Mammary epithelial cell (primary cell): ENCODE measurements at regions of chr13 and their contacts with region 1.

Region 1: GRCh38 chr13:79541426-79542049 is 60.6 kb downstream of the NDFIP2 start:
- DNase-seq: peak; percentile 42
- H3K4me3 ChIP-seq: no peak overlapping the region
- H3K27ac ChIP-seq: no peak overlapping the region
- H3K4me1 ChIP-seq: no peaks in the 10 kb centered on the region
- H3K27me3 ChIP-seq: no peaks in the 10 kb centered on the region
- CTCF ChIP-seq: peak; percentile 58 to 71

Region 2: DNA sequence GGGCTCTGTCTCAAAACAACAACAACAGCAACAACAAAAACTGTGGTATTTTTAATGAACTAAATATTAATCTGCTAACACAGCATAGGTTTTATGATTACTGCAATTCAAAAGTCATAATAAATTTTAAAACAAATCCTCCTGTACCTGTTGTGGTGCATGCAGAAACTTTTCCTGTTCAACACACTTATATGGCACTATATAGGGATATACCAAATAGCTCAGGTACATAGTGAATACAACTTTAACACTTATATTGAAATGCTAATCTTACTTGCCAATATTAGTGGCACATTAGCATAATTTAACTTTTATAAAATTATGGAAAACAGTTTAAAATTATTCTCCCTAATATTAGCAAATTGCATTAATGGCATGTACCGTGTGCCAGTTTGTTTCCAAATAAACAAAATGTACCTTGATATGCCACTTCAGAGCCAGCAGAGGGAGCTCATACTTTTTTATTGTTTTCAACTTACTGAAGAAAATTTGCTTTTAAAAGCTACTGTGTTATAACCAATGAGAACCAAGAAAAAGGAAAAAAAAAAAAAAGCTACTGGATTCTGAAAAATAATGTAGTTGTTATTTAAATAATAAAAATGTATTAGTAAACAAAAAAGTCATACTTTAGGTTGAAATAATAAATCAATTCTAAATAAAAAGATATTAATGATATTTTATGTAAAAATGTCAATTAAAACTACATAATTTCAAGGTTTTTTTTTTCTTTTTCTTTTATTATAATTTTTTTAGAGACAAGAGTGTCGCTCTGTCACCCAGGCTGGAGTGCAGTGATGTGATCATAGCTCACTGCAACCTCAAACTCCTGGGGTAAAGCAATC is 117.5 kb before region 1 on chr13:
- CTCF ChIA-PET with region 1: interaction called, 11 read pairs
- dilution Hi-C with region 1: no loop called
- in situ Hi-C with region 1: loop called (anchors 5 kb)
- intact Hi-C with region 1: loop called (anchors 1 kb)
- DNase-seq: no peak
- H3K4me3 ChIP-seq: no peak overlapping the region
- H3K27ac ChIP-seq: no peak overlapping the region
- H3K4me1 ChIP-seq: no peaks in the 10 kb centered on the region
- H3K27me3 ChIP-seq: no peaks in the 10 kb centered on the region
- CTCF ChIP-seq: peak; percentile 59 to 67

Region 3: GRCh38 chr13:79451500-79451962 is 90.0 kb before region 1 on chr13:
- CTCF ChIA-PET with region 1: no interaction called
- dilution Hi-C with region 1: no loop called
- in situ Hi-C with region 1: no loop called
- intact Hi-C with region 1: no loop called
- DNase-seq: peak; percentile 93
- H3K4me3 ChIP-seq: no peak overlapping the region
- H3K27ac ChIP-seq: peak overlapping the region; percentile 26
- H3K4me1 ChIP-seq: peaks cover 8% of the 10 kb centered on the region
- H3K27me3 ChIP-seq: no peaks in the 10 kb centered on the region
- CTCF ChIP-seq: no peak

Region 4: GRCh38 chr13:79501538-79502232 is 39.9 kb before region 1 on chr13:
- CTCF ChIA-PET with region 1: no interaction called
- dilution Hi-C with region 1: loop called (anchors 5 kb)
- in situ Hi-C with region 1: no loop called
- intact Hi-C with region 1: no loop called
- DNase-seq: peak; percentile 23
- H3K4me3 ChIP-seq: no peak overlapping the region
- H3K27ac ChIP-seq: no peak overlapping the region
- H3K4me1 ChIP-seq: peaks cover 11% of the 10 kb centered on the region
- H3K27me3 ChIP-seq: no peaks in the 10 kb centered on the region
- CTCF ChIP-seq: no peak

Region 5: GRCh38 chr13:79512950-79513349 is 28.6 kb before region 1 on chr13:
- CTCF ChIA-PET with region 1: no interaction called
- dilution Hi-C with region 1: no loop called
- in situ Hi-C with region 1: no loop called
- intact Hi-C with region 1: no loop called
- DNase-seq: no peak
- H3K4me3 ChIP-seq: no peak overlapping the region
- H3K27ac ChIP-seq: no peak overlapping the region
- H3K4me1 ChIP-seq: peaks cover 8% of the 10 kb centered on the region
- H3K27me3 ChIP-seq: no peaks in the 10 kb centered on the region
- CTCF ChIP-seq: no peak

Region 6: GRCh38 chr13:81017513-81018152 is 1476.1 kb after region 1 on chr13:
- CTCF ChIA-PET with region 1: no interaction called
- dilution Hi-C with region 1: no loop called
- in situ Hi-C with region 1: no loop called
- intact Hi-C with region 1: loop called (anchors 10 kb)
- DNase-seq: peak; percentile 12
- H3K4me3 ChIP-seq: no peak overlapping the region
- H3K27ac ChIP-seq: no peak overlapping the region
- H3K4me1 ChIP-seq: peaks cover 7% of the 10 kb centered on the region
- H3K27me3 ChIP-seq: no peaks in the 10 kb centered on the region
- CTCF ChIP-seq: peak; percentile 41 to 59